Left lung (tissue), 14 donors: ENCODE measurements at regions of chr1 and their contacts with region 1.

Region 1: GRCh38 chr1:178498896-178499675 is 2.3 kb upstream of the CLEC20A start:
- DNase-seq: no peak
- ATAC-seq: no peak
- H3K4me3 ChIP-seq: no peak overlapping the region
- H3K27ac ChIP-seq: no peak overlapping the region
- H3K4me1 ChIP-seq: no peaks in the 10 kb centered on the region
- H3K27me3 ChIP-seq: no peaks in the 10 kb centered on the region
- CTCF ChIP-seq: no peak

Region 2: DNA sequence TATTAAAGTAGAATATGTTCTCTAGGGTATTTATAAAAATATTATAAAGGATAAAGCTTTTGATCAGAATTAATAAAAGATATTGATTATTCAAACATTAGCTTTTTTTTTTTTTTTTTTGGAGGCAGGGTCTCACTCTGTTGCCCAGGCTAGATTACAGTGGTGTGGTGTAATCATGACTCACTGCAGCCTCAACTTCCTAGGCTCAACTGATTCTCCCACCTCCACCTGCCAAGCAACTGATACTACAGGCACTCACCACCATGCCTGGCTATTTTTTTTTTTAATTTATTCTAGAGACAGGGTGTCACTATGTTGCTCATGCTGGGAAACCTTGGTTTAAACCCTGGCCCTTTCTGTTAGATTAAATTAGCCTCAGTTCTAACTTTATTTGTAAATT is 190.6 kb before region 1 on chr1:
- intact Hi-C with region 1: loop called in 1 of 2 experiments (anchors 10 kb)
- DNase-seq: no peak
- ATAC-seq: no peak
- H3K4me3 ChIP-seq: no peak overlapping the region
- H3K27ac ChIP-seq: no peak overlapping the region
- H3K4me1 ChIP-seq: peaks cover 6 to 9% of the 10 kb centered on the region in 2 donors
- H3K27me3 ChIP-seq: no peaks in the 10 kb centered on the region
- CTCF ChIP-seq: no peak